ENCODE measurements at regions of chr6 and their contacts with region 1.

Region 1: GRCh38 chr6:112180095-112180820 is 74.1 kb downstream of the LAMA4 start:
- DNase-seq: peak in 1 of 3 donors; percentile 41
- ATAC-seq: peak; percentile 52
- H3K4me3 ChIP-seq: no peak overlapping the region
- H3K4me1 ChIP-seq: no peaks in the 10 kb centered on the region
- CTCF ChIP-seq: peak; percentile 26

Region 2: DNA sequence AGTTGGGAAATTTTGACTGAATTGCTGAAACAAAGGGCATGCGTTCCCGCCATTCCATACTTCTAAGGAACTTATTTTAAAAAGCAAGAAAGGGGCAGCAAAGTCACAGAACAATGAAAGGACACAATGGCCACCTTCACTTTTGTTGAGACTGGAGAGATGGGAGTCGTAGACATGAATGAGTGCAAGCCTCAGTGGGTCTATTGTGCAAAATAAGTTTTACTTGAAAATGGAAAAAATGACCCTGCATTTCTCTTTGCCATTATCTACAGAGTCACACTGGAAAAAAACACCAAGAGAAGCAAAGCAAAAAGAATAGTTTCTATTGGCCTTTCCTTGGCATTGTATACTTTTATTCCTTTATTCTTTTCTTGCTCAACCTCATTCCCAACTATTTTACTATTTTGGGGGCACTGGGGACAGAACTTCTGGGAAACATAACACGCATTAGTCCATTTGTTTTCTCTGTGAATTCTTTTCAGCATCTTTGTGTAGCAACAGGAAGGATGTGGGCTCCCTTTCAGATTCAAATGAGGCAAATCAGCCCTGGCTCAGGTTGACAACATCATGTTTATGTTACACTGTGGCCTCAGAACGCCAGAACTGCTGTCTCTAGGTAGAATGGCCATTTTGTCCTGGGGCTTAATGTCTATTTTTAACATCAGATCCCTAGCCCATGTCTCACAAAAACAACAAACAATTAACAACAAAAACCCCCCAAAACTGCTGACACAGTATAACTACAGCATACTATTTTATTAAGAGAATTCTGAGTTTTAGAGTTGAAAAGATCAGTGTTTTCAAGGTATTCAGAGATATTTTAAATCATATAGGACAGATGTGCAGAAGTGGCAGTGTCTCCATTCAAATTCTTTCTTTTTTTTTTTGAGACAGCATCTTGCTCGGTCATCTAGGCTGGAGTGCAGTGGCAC is 429.2 kb before region 1 on chr6:
- intact Hi-C with region 1: no loop called
- DNase-seq: peak in 1 of 3 donors; percentile 36
- ATAC-seq: peak; percentile 83
- H3K4me3 ChIP-seq: no peak overlapping the region
- H3K4me1 ChIP-seq: no peaks in the 10 kb centered on the region
- CTCF ChIP-seq: no peak

Region 3: GRCh38 chr6:112117554-112117953 is 62.7 kb before region 1 on chr6:
- intact Hi-C with region 1: no loop called
- DNase-seq: no peak
- ATAC-seq: no peak
- H3K4me3 ChIP-seq: no peak overlapping the region
- H3K4me1 ChIP-seq: no peaks in the 10 kb centered on the region
- CTCF ChIP-seq: no peak

Region 4: GRCh38 chr6:112269114-112269513 is 88.9 kb after region 1 on chr6:
- intact Hi-C with region 1: no loop called
- DNase-seq: no peak
- ATAC-seq: no peak
- H3K4me3 ChIP-seq: no peak overlapping the region
- H3K4me1 ChIP-seq: no peaks in the 10 kb centered on the region
- CTCF ChIP-seq: no peak

Region 5: GRCh38 chr6:112311950-112312547 is 131.8 kb after region 1 on chr6:
- intact Hi-C with region 1: loop called in 1 of 2 experiments (anchors 5 kb)
- DNase-seq: no peak
- ATAC-seq: no peak
- H3K4me3 ChIP-seq: no peak overlapping the region
- H3K4me1 ChIP-seq: no peaks in the 10 kb centered on the region
- CTCF ChIP-seq: peak; percentile 24